Activated naive CD4-positive, alpha-beta T cell treated with anti-CD3 and anti-CD28 coated beads, Interleukin-2, amount 10 ng/mL, durations not matched to agents 7 days and 5 days (primary cell): ENCODE measurements at regions of chr11 and their contacts with region 1.

Region 1: GRCh38 chr11:117946842-117947526 is 17.8 kb upstream of the TMPRSS13 start:
- DNase-seq: peak; percentile 86
- H3K4me3 Mint-ChIP-seq: no peak overlapping the region
- H3K27ac Mint-ChIP-seq: peak overlapping the region; percentile 53
- H3K4me1 Mint-ChIP-seq: peaks cover 85% of the 10 kb centered on the region
- H3K27me3 Mint-ChIP-seq: peaks cover 11% of the 10 kb centered on the region

Region 2: GRCh38 chr11:117807482-117808327 is 139.3 kb before region 1 on chr11:
- CTCF ChIA-PET with region 1: interaction called, 69 read pairs
- DNase-seq: peak; percentile 83
- H3K4me3 Mint-ChIP-seq: no peak overlapping the region
- H3K27ac Mint-ChIP-seq: no peak overlapping the region
- H3K4me1 Mint-ChIP-seq: peaks cover 9% of the 10 kb centered on the region
- H3K27me3 Mint-ChIP-seq: peaks cover 53% of the 10 kb centered on the region

Region 3: GRCh38 chr11:117843666-117844484 is 103.1 kb before region 1 on chr11:
- CTCF ChIA-PET with region 1: interaction called, 149 read pairs
- DNase-seq: peak; percentile 87
- H3K4me3 Mint-ChIP-seq: no peak overlapping the region
- H3K27ac Mint-ChIP-seq: no peak overlapping the region
- H3K4me1 Mint-ChIP-seq: no peaks in the 10 kb centered on the region
- H3K27me3 Mint-ChIP-seq: peaks cover 23% of the 10 kb centered on the region

Region 4: GRCh38 chr11:117919781-117920221 is 27.2 kb before region 1 on chr11:
- CTCF ChIA-PET with region 1: interaction called, 15 read pairs
- DNase-seq: no peak
- H3K4me3 Mint-ChIP-seq: no peak overlapping the region
- H3K27ac Mint-ChIP-seq: no peak overlapping the region
- H3K4me1 Mint-ChIP-seq: peaks cover 3% of the 10 kb centered on the region
- H3K27me3 Mint-ChIP-seq: peaks cover 25% of the 10 kb centered on the region

Region 5: DNA sequence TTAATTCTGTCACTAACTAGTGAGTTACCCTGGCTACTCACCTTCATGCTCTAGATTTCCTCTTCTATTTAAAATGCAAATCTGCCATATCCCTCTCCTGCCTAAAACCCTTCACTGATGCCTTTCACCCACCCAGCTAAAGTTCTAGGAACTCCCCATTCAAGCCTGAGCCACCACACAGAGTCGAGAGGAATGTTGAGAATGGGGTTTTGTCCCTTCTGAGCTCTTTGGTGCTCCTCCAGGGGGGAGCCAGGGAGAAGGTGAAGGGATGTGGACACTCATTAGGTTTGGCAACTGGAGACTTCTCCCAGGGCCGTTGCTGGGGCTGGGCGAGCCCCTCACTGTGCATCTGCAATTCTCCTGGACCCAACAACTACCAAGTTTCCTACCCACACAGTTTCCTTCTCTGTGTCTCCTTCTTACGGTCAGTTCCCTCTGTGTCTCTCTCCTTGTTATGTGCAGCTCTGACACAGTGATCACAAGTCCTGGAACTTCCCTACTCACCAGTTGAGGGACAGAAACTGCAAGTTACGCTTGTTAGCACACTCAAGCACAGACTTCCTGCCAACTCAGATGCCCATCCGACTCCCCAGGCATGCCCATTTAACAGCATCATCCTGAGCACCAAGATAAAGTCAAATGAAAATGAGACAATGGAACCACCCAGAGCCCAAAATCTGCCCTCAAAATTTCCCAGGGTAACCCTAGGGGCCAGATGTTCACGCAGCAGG is 32.7 kb after region 1 on chr11:
- CTCF ChIA-PET with region 1: interaction called, 30 read pairs
- DNase-seq: no peak
- H3K4me3 Mint-ChIP-seq: no peak overlapping the region
- H3K27ac Mint-ChIP-seq: peak overlapping the region; percentile 13
- H3K4me1 Mint-ChIP-seq: peaks cover 67% of the 10 kb centered on the region
- H3K27me3 Mint-ChIP-seq: peaks cover 4% of the 10 kb centered on the region

Region 6: GRCh38 chr11:118046051-118046963 is 99.3 kb after region 1 on chr11:
- CTCF ChIA-PET with region 1: interaction called, 304 read pairs
- DNase-seq: no peak
- H3K4me3 Mint-ChIP-seq: no peak overlapping the region
- H3K27ac Mint-ChIP-seq: peak overlapping the region; percentile 56
- H3K4me1 Mint-ChIP-seq: peaks cover 81% of the 10 kb centered on the region
- H3K27me3 Mint-ChIP-seq: no peaks in the 10 kb centered on the region

Region 7: DNA sequence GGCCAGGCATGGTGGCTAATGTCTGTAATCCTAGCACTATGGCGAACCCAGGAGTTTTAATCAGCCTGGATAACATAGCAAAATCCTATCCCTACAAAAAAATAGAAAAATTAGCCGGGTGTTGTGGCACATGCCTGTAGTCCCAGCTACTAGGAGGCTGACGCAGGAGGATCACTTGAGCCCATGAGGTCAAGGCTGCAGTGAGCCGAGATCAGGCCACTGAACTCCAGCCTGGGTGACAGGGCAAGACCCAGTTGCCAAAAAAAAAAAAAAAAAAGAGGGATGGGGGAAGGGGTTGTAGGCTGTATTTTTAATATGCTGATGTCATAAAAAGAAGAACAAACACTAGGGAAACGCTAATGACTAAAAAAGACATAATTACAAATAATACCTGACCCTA is 831.9 kb after region 1 on chr11:
- CTCF ChIA-PET with region 1: no interaction called
- DNase-seq: no peak
- H3K4me3 Mint-ChIP-seq: no peak overlapping the region
- H3K27ac Mint-ChIP-seq: no peak overlapping the region
- H3K4me1 Mint-ChIP-seq: peaks cover 28% of the 10 kb centered on the region
- H3K27me3 Mint-ChIP-seq: no peaks in the 10 kb centered on the region